WTC11 (cell line): ENCODE measurements at regions of chr12 and their contacts with region 1.

Region 1: DNA sequence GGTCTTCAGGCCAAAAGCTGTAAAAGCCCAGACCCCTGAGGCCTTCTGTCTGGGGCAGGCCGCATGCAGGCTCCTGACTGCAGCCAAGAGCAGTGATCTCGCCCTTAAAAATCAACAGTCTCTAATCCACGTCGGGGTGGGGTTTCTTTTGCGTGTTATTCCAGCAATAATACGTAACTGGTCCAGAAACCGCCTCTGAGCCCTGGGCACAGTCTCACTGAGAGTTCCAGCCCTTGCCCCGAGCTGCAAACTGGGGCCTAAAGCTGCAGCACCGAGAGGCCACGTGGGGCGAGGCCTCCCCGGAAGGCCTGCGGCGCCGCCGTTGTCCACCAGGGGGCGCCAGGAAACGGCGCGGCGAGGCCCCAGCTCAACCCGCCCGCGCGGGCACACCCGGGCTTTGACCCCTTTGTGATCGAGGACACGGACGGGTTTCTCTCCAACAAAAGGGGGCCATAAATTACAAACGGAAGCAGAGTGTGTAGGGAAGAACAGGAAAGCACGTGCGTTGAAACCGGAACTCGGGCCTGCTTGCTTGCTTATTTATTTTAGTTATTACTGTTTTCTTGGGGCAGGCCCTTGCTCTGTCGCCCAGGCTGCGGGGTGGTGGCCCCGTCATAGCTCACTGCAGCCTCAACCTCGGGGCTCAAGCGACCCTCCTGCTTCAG is 87.2 kb downstream of the NINJ2 start:
- DNase-seq: peak; percentile 83
- ATAC-seq: peak; percentile 88
- H3K4me3 Mint-ChIP-seq: no peak overlapping the region
- H3K27ac Mint-ChIP-seq: no peak overlapping the region
- H3K4me1 Mint-ChIP-seq: peaks cover 27% of the 10 kb centered on the region
- H3K27me3 Mint-ChIP-seq: peaks cover 12% of the 10 kb centered on the region
- CTCF ChIP-seq: peak; percentile 99

Region 2: DNA sequence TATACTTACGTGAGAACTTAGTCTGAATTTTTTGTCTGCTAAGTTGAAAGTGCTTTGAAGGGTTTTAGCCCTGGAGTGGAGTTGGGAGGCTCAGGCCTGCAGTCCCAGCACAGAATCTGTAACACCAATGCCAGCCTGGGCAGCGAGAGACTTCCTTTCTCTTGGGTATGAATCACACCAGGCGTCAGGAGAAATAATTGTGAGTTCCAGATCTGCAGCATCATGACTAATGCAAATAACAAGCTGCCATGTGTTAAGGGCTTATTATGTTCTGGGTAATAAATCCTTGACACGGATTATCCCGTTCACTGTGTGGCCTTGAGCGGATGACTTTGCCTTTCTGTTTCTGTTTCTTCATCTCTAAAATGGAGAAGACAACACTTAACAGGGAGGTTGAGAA is 45.8 kb before region 1 on chr12:
- CTCF ChIA-PET with region 1: no interaction called
- POLR2A ChIA-PET with region 1: no interaction called
- DNase-seq: no peak
- ATAC-seq: no peak
- H3K4me3 Mint-ChIP-seq: no peak overlapping the region
- H3K27ac Mint-ChIP-seq: no peak overlapping the region
- H3K4me1 Mint-ChIP-seq: no peaks in the 10 kb centered on the region
- H3K27me3 Mint-ChIP-seq: peaks cover 3% of the 10 kb centered on the region
- CTCF ChIP-seq: no peak

Region 3: DNA sequence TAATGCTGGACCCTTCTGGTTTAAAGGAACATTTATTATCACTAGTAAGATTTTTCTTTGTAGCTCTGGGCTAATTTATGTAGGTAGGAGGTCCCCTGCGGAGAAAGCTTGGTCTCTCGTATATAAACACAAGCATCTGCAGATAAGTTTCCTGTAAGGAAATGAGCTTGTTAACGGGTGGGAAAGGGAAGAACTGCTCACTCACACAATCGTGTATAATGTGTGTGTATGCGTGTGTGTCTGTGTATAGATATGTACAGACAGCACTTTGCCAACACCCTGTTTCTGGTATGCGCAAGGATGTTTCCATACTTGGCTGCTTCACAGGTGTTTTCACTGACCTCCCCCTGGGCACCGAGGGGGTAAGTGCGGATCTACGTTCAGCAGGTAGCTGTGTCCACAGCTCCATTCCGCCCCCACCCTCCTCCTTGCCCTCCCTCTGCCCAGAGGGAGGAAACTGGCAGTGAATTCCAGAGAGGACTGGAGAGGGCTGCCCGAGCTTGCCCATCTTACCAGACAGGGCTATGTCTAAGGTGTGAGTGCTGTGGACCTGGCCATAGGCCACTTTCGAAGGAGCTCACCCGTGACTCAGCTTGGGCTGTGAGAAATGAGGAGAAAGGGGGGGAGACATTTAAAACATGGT is 22.0 kb after region 1 on chr12:
- CTCF ChIA-PET with region 1: interaction called, 17 read pairs
- POLR2A ChIA-PET with region 1: no interaction called
- DNase-seq: no peak
- ATAC-seq: no peak
- H3K4me3 Mint-ChIP-seq: no peak overlapping the region
- H3K27ac Mint-ChIP-seq: no peak overlapping the region
- H3K4me1 Mint-ChIP-seq: peaks cover 9% of the 10 kb centered on the region
- H3K27me3 Mint-ChIP-seq: no peaks in the 10 kb centered on the region
- CTCF ChIP-seq: no peak

Region 4: DNA sequence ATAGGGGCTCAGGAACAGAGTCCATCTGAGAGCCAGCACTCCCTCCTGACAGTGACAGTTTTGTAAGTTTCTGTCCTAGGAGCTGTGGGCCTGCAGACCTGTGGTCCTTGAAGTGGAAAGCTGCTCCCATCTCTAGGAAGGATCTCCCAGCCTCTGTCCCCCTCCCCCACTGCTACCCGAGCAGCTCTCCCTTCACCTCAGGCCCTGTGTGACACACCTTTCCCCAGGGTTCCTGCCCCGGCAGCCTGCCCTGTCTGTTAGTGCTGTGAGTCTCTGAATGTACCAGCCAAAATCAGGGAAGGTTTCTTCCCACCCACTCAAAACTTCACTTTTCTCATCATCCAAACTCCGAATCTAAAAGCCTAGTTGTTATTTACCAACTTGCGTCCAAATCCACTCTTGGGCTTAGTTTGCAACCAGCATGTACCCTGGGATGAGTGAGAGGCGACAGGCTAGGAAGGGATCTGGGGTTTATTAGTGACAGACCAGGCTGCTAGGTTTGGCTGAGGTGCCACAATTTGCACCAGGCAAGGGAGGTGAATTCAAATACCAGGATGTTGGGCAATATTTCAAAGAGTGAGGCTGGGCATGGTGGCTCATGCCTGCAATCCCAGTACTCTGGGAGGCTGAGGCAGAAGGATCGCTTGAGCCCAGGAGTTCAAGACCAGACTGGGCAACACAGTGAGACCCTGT is 47.2 kb after region 1 on chr12:
- CTCF ChIA-PET with region 1: interaction called, 12 read pairs
- POLR2A ChIA-PET with region 1: no interaction called
- DNase-seq: no peak
- ATAC-seq: peak; percentile 68
- H3K4me3 Mint-ChIP-seq: 0 out of 2 replicates have a peak overlapping the region, but pooled peaks have one; percentile 5
- H3K27ac Mint-ChIP-seq: no peak overlapping the region
- H3K4me1 Mint-ChIP-seq: peaks cover 23% of the 10 kb centered on the region
- H3K27me3 Mint-ChIP-seq: no peaks in the 10 kb centered on the region
- CTCF ChIP-seq: no peak

Region 5: DNA sequence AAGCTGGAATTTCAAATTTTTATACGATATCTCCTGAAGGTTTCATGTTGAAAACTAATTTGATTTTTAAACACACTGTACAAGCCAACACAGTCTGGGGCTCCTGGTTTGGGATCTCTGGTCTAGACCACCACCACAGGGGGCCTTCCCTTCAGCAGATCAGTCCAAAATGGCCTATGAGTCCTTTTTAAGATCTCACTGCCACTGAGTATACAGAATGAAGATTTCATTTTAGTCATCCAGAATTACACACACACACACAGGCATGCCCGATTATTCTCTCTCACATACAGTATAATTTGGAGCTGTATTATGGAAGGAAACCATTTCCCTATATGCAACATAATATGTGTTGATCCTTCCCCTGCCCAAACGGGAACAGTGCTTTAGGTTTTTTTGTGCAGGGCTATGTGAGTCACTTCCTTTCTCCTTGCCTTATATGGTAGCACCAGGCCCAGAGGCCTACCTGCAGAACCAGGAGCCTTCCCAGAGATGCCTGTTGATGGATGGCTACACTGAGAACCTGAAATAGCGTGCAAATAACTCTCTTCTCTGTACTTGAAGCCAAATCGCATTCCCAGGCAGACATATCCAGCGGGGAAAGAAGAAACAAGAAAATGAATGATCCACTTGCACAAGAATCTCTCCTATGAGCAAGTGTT is 148.2 kb after region 1 on chr12:
- CTCF ChIA-PET with region 1: interaction called, 10 read pairs
- POLR2A ChIA-PET with region 1: no interaction called
- DNase-seq: no peak
- ATAC-seq: peak; percentile 82
- H3K4me3 Mint-ChIP-seq: no peak overlapping the region
- H3K27ac Mint-ChIP-seq: peak overlapping the region; percentile 52; the same call in 1 of the 2 replicates
- H3K4me1 Mint-ChIP-seq: peaks cover 40% of the 10 kb centered on the region
- H3K27me3 Mint-ChIP-seq: no peaks in the 10 kb centered on the region
- CTCF ChIP-seq: no peak

Region 6: GRCh38 chr12:949453-950191 is 373.5 kb after region 1 on chr12 and contains the start of gene RAD52:
- CTCF ChIA-PET with region 1: interaction called, 17 read pairs
- POLR2A ChIA-PET with region 1: interaction called, 3 read pairs
- DNase-seq: peak; percentile 99
- ATAC-seq: peak; percentile 91
- H3K4me3 Mint-ChIP-seq: peak within 1 kb of the TSS; percentile 97
- H3K27ac Mint-ChIP-seq: peak within 1 kb of the TSS; percentile 99
- H3K4me1 Mint-ChIP-seq: peaks cover 17% of the 10 kb centered on the region
- H3K27me3 Mint-ChIP-seq: no peaks in the 10 kb centered on the region
- CTCF ChIP-seq: peak; percentile 86
- total RNA-seq, gene RAD52: 17.1 to 20.7 TPM (median 19.2 TPM) in 3 replicates